BJ (cell line): ENCODE measurements at regions of chrX and their contacts with region 1.

Region 1: GRCh38 chrX:16687514-16687913 is 25.0 kb downstream of the CTPS2 start:
- DNase-seq: peak; percentile 22
- H3K4me3 ChIP-seq: no peak overlapping the region
- H3K27me3 ChIP-seq: no peaks in the 10 kb centered on the region
- CTCF ChIP-seq: no peak

Region 2: GRCh38 chrX:16429406-16429805 is 258.1 kb before region 1 on chrX:
- CTCF ChIA-PET with region 1: no interaction called
- POLR2A ChIA-PET with region 1: interaction called, 12 read pairs
- DNase-seq: no peak
- H3K4me3 ChIP-seq: no peak overlapping the region
- H3K27me3 ChIP-seq: no peaks in the 10 kb centered on the region
- CTCF ChIP-seq: no peak

Region 3: DNA sequence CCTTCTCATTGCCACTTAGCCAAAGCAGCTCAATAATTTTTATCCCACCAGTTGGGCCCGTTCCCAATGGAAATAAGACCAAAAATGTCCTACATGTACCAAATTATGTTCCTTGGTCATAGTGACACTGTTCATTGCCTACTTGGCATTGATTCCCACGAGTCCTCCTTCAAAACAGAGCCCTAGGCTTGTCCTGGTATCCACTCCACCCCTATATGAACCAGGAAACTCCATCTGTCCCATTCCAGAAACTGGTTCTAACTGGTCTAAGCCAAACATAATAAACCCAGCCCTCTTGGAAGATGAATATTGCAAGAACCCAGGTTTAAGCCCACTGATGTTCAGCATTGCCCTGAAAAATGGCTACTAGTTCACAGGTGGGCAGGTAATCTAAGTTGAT is 68.5 kb before region 1 on chrX:
- CTCF ChIA-PET with region 1: no interaction called
- POLR2A ChIA-PET with region 1: no interaction called
- DNase-seq: no peak
- H3K4me3 ChIP-seq: no peak overlapping the region
- H3K27me3 ChIP-seq: no peaks in the 10 kb centered on the region
- CTCF ChIP-seq: no peak